Activated CD4-positive, alpha-beta T cell treated with anti-CD3 and anti-CD28 coated beads, Interleukin-2, amount 10 ng/mL, durations not matched to agents 24 days and 14 days (primary cell): ENCODE measurements at regions of chr1 and their contacts with region 1.

Region 1: DNA sequence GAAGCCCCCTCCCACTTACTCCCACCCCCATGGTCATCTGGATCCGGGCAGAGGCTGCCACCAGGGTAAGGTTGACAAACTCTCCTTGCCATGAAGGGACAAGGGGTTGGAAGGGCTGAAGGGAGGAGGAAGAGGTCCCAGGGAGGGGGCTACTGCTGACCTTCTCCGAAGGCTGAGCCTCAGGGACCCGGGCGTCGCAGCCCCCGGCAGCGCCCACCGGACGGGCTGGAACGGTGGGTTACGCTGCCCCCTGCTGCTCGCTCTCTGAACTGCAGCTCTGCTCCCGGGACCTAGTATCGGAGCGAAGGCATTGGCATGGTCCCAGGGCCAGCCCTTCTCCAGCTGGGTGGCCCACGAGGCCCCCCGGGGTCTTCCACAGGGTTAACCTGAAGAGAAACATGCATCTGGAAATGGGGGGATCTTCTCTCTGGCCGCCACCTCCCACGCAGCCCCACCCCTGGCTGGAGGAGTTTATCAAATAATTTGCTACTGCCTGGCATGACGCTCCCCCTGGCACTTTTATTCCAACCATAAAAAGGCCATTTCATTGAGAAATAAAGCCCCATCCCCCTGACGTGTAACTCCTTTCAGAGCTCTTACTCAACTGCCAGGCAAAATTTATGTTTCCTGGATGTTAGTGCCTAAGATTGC is 70.4 kb upstream of the TARDBP start:
- DNase-seq: peak; percentile 90
- H3K4me3 Mint-ChIP-seq: no peak overlapping the region
- H3K27ac Mint-ChIP-seq: no peak overlapping the region
- H3K4me1 Mint-ChIP-seq: peaks cover 29% of the 10 kb centered on the region
- H3K27me3 Mint-ChIP-seq: peaks cover 59% of the 10 kb centered on the region

Region 2: GRCh38 chr1:10489291-10490055 is 452.5 kb before region 1 on chr1:
- intact Hi-C with region 1: no loop called
- DNase-seq: no peak
- H3K4me3 Mint-ChIP-seq: no peak overlapping the region
- H3K27ac Mint-ChIP-seq: peak overlapping the region; percentile 44
- H3K4me1 Mint-ChIP-seq: peaks cover 16% of the 10 kb centered on the region
- H3K27me3 Mint-ChIP-seq: no peaks in the 10 kb centered on the region

Region 3: GRCh38 chr1:10867138-10867721 is 74.8 kb before region 1 on chr1:
- intact Hi-C with region 1: loop called (anchors 2 kb)
- DNase-seq: peak; percentile 90
- H3K4me3 Mint-ChIP-seq: peak overlapping the region; percentile 41
- H3K27ac Mint-ChIP-seq: no peak overlapping the region
- H3K4me1 Mint-ChIP-seq: peaks cover 14% of the 10 kb centered on the region
- H3K27me3 Mint-ChIP-seq: peaks cover 65% of the 10 kb centered on the region

Region 4: DNA sequence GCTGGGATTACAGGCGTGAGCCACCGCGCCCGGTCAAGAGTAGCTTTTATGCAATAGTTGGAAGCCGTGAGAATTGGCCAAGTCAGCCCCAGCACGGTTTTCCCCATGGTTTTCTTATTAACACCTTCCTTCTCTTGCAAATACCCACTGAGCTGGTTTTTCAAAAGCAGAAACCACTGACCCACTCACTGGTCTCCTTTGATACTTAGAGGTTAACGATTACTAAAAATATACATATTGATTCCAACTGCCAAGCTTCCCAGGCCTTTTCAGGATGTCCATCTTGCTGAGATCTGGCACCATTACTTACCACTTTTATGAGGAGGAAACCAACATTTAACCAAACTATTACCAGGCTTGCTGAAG is 44.5 kb after region 1 on chr1:
- intact Hi-C with region 1: no loop called
- DNase-seq: no peak
- H3K4me3 Mint-ChIP-seq: no peak overlapping the region
- H3K27ac Mint-ChIP-seq: no peak overlapping the region
- H3K4me1 Mint-ChIP-seq: peaks cover 6% of the 10 kb centered on the region
- H3K27me3 Mint-ChIP-seq: peaks cover 8% of the 10 kb centered on the region